Activated naive CD8-positive, alpha-beta T cell treated with anti-CD3 and anti-CD28 coated beads, Interleukin-2, amount 10 ng/mL, durations not matched to agents 7 days and 5 days (primary cell): ENCODE measurements at regions of chr2 and their contacts with region 1.

Region 1: DNA sequence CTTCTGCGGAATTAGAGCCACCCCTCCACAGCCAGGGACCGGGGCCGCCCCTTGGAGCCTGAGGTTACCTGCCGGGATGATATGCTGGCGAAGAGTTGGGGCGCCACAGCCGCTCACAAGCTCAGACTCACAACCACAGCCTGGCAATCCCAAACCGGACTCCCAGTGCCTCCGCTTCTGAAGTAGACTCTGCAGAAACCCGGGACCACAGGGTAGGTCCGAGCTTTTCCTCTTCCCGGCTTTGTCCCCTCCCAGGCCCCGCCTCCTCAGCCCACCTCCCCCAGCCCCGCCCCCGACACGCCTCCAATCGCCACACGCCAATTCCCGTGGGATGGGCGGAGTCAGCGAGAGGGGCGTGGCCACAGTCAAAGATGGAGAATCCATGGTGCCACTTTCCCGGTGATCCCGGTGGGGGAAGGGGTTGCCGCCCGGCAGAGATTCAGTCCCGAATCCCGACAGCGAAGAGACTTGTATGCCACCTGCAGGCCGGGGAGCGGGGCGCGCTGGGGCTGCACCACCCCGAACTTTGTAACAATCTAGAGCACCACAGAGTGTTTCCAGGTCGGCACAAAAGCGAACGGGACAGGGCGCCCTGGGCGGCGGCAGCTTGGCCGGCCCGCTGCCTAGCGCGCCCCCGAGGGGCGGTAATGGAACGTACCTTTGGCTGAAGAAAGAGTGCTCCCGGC is at the start of gene IDH1:
- DNase-seq: peak; percentile 98
- ATAC-seq: peak; percentile 73
- H3K4me3 Mint-ChIP-seq: peak within 1 kb of the TSS; percentile 97
- H3K27ac Mint-ChIP-seq: peak within 1 kb of the TSS; percentile 80
- H3K4me1 Mint-ChIP-seq: peaks cover 27% of the 10 kb centered on the region
- H3K27me3 Mint-ChIP-seq: no peaks in the 10 kb centered on the region
- total RNA-seq, gene IDH1: 29.5 to 30.0 TPM

Region 2: DNA sequence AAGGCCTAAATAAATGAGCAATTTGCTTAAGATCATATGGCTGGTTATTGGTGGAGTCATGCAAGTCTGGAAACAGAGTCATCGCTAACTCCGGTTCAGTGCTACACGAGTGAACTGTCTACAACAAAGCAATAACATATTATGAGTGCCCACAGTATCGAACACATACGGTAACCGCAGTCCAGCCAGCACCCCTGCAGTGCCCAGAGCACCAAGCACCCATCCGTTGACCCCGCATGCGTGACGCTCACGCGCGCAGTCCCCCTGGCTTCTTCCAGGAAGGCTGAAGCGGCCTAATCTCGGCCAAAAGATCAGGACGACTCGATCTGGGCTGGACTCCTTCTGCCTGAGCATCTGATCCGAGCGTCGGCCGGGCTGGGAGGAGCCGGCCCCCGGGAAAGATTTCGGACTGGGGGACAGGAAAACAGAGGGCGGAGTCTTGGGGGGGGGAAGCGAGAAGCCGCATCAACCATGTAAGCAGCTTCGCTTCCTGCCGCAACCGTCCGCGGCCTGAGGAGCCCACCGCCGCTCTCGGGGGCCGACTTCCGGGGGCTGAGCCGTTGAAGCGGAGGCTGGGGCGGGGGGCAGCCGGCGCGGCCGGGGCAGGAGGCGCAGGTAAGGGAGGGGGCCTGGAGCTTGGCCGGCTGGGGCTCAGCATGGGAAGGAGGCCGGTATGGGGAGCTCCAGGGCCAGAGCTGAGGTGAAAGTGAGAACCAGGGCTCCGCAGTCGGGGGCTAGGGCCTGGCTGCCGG is 11.0 kb after region 1 on chr2 and contains the start of gene PIKFYVE:
- POLR2A ChIA-PET with region 1: interaction called, 32 read pairs
- DNase-seq: peak; percentile 89
- ATAC-seq: peak; percentile 86
- H3K4me3 Mint-ChIP-seq: peak within 1 kb of the TSS; percentile 88
- H3K27ac Mint-ChIP-seq: peak within 1 kb of the TSS; percentile 94
- H3K4me1 Mint-ChIP-seq: peaks cover 31% of the 10 kb centered on the region
- H3K27me3 Mint-ChIP-seq: no peaks in the 10 kb centered on the region
- total RNA-seq, gene PIKFYVE: 38.7 to 39.8 TPM